ENCODE measurements at regions of chr5 and their contacts with region 1.

Region 1: DNA sequence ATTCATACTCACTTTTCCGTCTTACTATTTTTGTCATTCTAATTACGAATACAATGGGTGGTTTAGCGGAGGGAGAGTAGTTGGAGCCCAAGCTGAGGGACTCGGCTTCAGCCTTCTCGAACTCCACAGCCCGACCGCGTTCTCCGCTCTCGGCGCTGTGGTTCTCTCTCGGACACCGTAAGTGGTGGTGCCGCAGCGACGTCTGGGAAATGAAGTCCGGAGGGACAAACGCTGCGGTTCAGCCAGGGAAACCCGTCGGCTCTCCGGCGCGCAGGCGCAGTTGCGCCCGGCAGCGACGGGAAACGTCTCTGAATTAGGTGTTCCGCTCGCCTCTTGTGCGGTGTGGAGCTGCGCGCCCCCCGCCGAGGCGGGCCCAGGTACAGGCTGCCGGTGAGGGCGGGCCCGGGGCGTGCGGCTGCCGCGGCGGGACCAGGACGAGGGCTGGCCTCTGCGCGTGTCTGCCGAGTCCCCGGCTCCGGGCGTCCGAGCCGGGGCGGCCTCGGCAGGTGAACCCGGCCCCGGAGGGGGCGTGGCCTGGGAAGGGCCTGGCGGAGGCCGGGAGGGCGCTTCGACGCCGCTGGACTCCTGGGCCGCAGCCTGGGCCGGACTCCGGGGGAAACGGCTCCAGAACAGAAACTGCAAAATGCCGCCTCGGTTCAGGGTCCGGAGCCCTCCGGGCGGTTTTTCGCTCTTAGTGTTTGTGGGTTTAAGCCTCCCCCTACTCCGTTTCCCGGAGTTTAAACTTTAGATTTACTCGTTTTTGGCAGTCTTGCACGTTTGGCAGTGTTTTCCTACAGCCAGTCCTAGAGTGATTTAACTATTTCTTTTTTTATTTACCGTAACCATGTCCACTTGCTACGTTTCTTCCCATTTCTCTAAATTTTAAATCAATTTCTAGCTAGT is at the start of gene ZNF879:
- DNase-seq: peak; percentile 96
- H3K4me3 ChIP-seq: peak within 1 kb of the TSS; percentile 72 to 80 (median 77)
- H3K27ac ChIP-seq: peak within 1 kb of the TSS; percentile 25
- H3K4me1 ChIP-seq: peaks cover 9% of the 10 kb centered on the region
- H3K27me3 ChIP-seq: no peaks in the 10 kb centered on the region
- CTCF ChIP-seq: no peak
- POLR2A ChIP-seq: no peak
- total RNA-seq, gene ZNF879: 2.7 and 3.7 TPM in 2 replicates

Region 2: GRCh38 chr5:178786859-178787760 is 236.7 kb before region 1 on chr5:
- CTCF ChIA-PET with region 1: no interaction called
- POLR2A ChIA-PET with region 1: no interaction called
- dilution Hi-C with region 1: no loop called
- intact Hi-C with region 1: no loop called
- DNase-seq: no peak
- H3K4me3 ChIP-seq: no peak overlapping the region
- H3K27ac ChIP-seq: no peak overlapping the region
- H3K4me1 ChIP-seq: no peaks in the 10 kb centered on the region
- H3K27me3 ChIP-seq: no peaks in the 10 kb centered on the region
- CTCF ChIP-seq: no peak
- POLR2A ChIP-seq: no peak

Region 3: GRCh38 chr5:178808886-178809285 is 214.9 kb before region 1 on chr5:
- CTCF ChIA-PET with region 1: no interaction called
- POLR2A ChIA-PET with region 1: no interaction called
- dilution Hi-C with region 1: no loop called
- intact Hi-C with region 1: no loop called
- DNase-seq: no peak
- H3K4me3 ChIP-seq: no peak overlapping the region
- H3K27ac ChIP-seq: no peak overlapping the region
- H3K4me1 ChIP-seq: no peaks in the 10 kb centered on the region
- H3K27me3 ChIP-seq: no peaks in the 10 kb centered on the region
- CTCF ChIP-seq: no peak
- POLR2A ChIP-seq: no peak

Region 4: GRCh38 chr5:178859625-178860531 is 163.9 kb before region 1 on chr5 and contains the start of gene ZNF354B:
- CTCF ChIA-PET with region 1: interaction called, 3 read pairs
- POLR2A ChIA-PET with region 1: no interaction called
- dilution Hi-C with region 1: no loop called
- intact Hi-C with region 1: loop called (anchors 1 kb)
- DNase-seq: peak; percentile 98
- H3K4me3 ChIP-seq: peak within 1 kb of the TSS; percentile 22 to 78 (median 38)
- H3K27ac ChIP-seq: peak within 1 kb of the TSS; percentile 53
- H3K4me1 ChIP-seq: no peaks in the 10 kb centered on the region
- H3K27me3 ChIP-seq: no peaks in the 10 kb centered on the region
- CTCF ChIP-seq: no peak
- POLR2A ChIP-seq: peak; percentile 63
- total RNA-seq, gene ZNF354B: 16.3 and 17.6 TPM in 2 replicates

Region 5: GRCh38 chr5:179060116-179061008 is 36.6 kb after region 1 on chr5 and contains the start of gene ZNF354C:
- CTCF ChIA-PET with region 1: interaction called, 8 read pairs
- POLR2A ChIA-PET with region 1: no interaction called
- dilution Hi-C with region 1: no loop called
- intact Hi-C with region 1: loop called (anchors 1 kb)
- DNase-seq: peak; percentile 93
- H3K4me3 ChIP-seq: peak within 1 kb of the TSS; percentile 1 to 73 (median 37)
- H3K27ac ChIP-seq: peak within 1 kb of the TSS; percentile 6
- H3K4me1 ChIP-seq: peaks cover 6% of the 10 kb centered on the region
- H3K27me3 ChIP-seq: no peaks in the 10 kb centered on the region
- CTCF ChIP-seq: no peak
- POLR2A ChIP-seq: peak; percentile 44
- total RNA-seq, gene ZNF354C: 4.7 and 5.0 TPM in 2 replicates

Region 6: GRCh38 chr5:179089502-179089901 is 65.7 kb after region 1 on chr5:
- CTCF ChIA-PET with region 1: no interaction called
- POLR2A ChIA-PET with region 1: no interaction called
- dilution Hi-C with region 1: no loop called
- intact Hi-C with region 1: loop called (anchors 10 kb)
- DNase-seq: no peak
- H3K4me3 ChIP-seq: no peak overlapping the region
- H3K27ac ChIP-seq: no peak overlapping the region
- H3K4me1 ChIP-seq: no peaks in the 10 kb centered on the region
- H3K27me3 ChIP-seq: no peaks in the 10 kb centered on the region
- CTCF ChIP-seq: no peak
- POLR2A ChIP-seq: no peak

Region 7: DNA sequence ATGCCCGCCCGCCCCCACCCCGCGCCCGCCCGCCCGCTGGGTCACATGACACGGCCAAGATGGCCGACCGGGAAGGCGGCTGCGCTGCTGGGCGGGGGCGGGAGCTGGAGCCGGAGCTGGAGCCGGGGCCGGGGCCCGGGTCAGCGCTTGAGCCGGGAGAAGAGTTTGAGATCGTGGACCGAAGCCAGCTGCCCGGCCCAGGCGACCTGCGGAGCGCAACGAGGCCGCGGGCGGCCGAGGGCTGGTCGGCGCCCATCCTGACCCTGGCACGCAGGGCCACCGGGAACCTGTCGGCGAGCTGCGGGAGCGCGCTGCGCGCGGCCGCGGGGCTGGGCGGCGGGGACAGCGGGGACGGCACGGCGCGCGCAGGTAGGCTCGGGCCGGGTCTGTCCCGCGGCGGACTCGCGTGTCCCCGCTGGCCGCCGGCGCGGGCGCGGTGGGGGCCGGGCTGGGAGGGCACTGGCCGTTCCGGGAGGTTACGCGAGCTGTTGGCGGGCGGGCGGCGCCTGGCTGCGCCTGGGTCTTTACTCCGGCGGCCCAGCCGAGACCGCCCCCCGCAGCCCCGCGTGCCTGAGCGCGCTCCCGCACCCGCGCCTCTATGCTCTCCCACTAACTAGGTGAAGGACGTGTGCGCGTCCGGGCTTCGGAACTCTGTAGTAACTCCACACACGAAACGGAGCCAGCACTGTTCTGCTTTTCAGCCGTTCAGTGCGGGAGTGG is 526.9 kb after region 1 on chr5 and contains the start of gene RUFY1:
- CTCF ChIA-PET with region 1: no interaction called
- POLR2A ChIA-PET with region 1: no interaction called
- dilution Hi-C with region 1: no loop called
- intact Hi-C with region 1: loop called (anchors 1 kb)
- DNase-seq: peak; percentile 85
- H3K4me3 ChIP-seq: peak within 1 kb of the TSS; percentile 71 to 89 (median 79)
- H3K27ac ChIP-seq: peak within 1 kb of the TSS; percentile 80
- H3K4me1 ChIP-seq: peaks cover 19% of the 10 kb centered on the region
- H3K27me3 ChIP-seq: no peaks in the 10 kb centered on the region
- CTCF ChIP-seq: no peak
- POLR2A ChIP-seq: peak; percentile 69
- total RNA-seq, gene RUFY1: 43.3 and 44.9 TPM in 2 replicates

Region 8: DNA sequence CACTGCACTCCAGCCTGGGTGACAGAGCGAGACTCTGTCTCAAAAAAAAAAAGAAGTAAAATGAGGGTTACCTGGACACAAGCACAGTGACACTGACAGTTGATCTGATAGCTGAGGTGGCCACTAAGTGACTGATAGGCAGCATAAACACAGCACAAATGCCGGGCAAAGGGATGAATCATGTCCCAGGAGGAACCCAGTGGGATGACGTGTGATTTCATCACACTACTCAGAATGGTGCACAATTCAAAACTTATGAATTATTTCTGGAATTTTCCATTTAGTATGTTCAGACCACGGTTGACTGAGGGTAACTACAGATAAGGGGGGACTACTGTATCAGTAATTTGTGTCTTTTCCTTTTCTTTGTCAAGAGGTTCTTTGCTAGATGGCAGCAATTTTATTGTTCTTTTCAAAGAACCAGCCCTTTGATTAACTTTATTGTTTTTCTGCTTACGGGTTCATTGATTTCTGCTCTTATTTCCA is 1082.1 kb after region 1 on chr5:
- CTCF ChIA-PET with region 1: no interaction called
- POLR2A ChIA-PET with region 1: no interaction called
- dilution Hi-C with region 1: no loop called
- intact Hi-C with region 1: no loop called
- DNase-seq: no peak
- H3K4me3 ChIP-seq: no peak overlapping the region
- H3K27ac ChIP-seq: no peak overlapping the region
- H3K4me1 ChIP-seq: no peaks in the 10 kb centered on the region
- H3K27me3 ChIP-seq: no peaks in the 10 kb centered on the region
- CTCF ChIP-seq: no peak
- POLR2A ChIP-seq: no peak